Right ventricle myocardium inferior (tissue), 1 donor: ENCODE measurements at regions of chr4 and their contacts with region 1.

Region 1: GRCh38 chr4:12231098-12231497 is 802.4 kb upstream of the HS3ST1 start:
- DNase-seq: no peak
- ATAC-seq: peak; percentile 90

Region 2: GRCh38 chr4:12172198-12172973 is 58.7 kb before region 1 on chr4:
- intact Hi-C with region 1: loop called (anchors 5 kb)
- DNase-seq: no peak
- ATAC-seq: peak; percentile 83

Region 3: GRCh38 chr4:12296366-12296765 is 65.3 kb after region 1 on chr4:
- intact Hi-C with region 1: no loop called
- DNase-seq: no peak
- ATAC-seq: no peak

Region 4: DNA sequence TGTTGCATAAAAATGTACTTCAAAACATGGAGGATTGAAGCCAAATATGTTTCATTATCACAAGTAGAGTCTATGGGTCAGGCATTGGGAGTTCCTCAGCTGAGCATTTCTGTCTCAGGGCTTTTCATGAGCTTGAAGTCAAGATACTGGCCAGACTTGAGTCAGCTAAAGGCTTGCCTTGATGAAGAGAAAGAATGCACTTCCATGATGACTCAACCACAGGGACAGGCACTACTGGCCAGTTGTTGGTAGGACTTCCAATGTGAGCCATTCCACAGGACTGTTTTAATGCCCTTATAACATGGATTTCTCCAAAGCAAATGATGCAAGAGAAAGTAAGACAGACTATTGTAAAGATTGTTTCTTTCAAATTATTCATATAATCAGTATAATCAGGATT is 357.5 kb after region 1 on chr4:
- intact Hi-C with region 1: no loop called
- DNase-seq: no peak
- ATAC-seq: no peak